Aorta (tissue), 5 donors: ENCODE measurements at regions of chr1 and their contacts with region 1.

Region 1: GRCh38 chr1:198465201-198466144 is 75.0 kb downstream of the ATP6V1G3 start:
- DNase-seq: no peak
- ATAC-seq: no peak
- H3K4me3 ChIP-seq: no peak overlapping the region
- H3K27ac ChIP-seq: no peak overlapping the region
- H3K4me1 ChIP-seq: no peaks in the 10 kb centered on the region
- H3K27me3 ChIP-seq: no peaks in the 10 kb centered on the region

Region 2: DNA sequence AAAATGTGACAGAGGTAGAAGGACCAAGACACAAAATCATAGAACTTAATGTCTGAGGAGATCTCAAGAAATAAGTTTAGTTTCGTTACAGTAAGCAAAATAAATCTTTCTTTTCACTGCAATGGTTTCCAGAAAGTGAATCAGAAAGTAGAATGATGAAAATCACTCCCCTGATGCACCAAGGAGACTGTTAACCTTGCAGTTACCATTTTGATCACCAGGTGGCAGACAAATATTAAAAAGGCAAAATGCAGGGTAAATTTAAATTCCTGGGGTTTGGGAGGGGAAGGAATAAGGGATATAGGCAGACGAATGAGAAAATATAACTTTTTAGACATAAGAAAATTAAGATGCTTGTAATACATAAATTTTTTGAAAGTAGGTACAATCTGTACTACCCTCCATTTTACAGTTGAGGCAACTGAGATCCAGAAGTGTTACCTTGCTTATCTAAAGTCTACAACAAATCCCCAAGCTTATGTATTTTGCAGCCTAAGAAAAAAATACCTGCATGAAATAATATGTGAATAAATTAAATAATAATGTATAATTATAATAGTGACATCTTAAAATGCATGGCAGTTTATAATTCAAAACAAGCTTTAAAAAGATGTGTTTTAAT is 944.2 kb before region 1 on chr1:
- intact Hi-C with region 1: loop called in 1 of 2 experiments (anchors 10 kb)
- DNase-seq: no peak
- ATAC-seq: no peak
- H3K4me3 ChIP-seq: no peak overlapping the region
- H3K27ac ChIP-seq: no peak overlapping the region
- H3K4me1 ChIP-seq: no peaks in the 10 kb centered on the region
- H3K27me3 ChIP-seq: no peaks in the 10 kb centered on the region

Region 3: GRCh38 chr1:197614916-197615692 is 850.4 kb before region 1 on chr1:
- intact Hi-C with region 1: loop called in 1 of 2 experiments (anchors 5 kb)
- DNase-seq: no peak
- ATAC-seq: peak; percentile 66
- H3K4me3 ChIP-seq: no peak overlapping the region
- H3K27ac ChIP-seq: no peak overlapping the region
- H3K4me1 ChIP-seq: no peaks in the 10 kb centered on the region
- H3K27me3 ChIP-seq: no peaks in the 10 kb centered on the region

Region 4: DNA sequence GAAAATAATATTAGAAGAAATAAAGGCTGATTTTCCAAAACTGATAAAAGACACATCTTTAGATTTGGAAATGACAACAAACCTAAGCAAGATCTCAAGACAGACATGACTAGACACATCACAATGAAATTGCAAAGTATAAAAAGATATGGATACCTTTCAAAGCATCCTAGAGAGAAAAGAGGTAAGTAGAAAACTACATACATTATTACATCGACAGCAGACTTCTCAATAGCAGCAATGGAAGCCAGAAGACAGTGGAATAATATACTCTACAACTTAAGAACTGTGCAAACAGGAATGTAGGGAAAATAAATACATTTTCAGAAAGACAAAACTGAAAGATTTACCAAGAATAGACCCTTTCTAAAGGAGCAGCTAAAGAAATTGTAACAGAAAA is 740.4 kb before region 1 on chr1:
- intact Hi-C with region 1: loop called in 1 of 2 experiments (anchors 10 kb)
- DNase-seq: no peak
- ATAC-seq: no peak
- H3K4me3 ChIP-seq: no peak overlapping the region
- H3K27ac ChIP-seq: no peak overlapping the region
- H3K4me1 ChIP-seq: no peaks in the 10 kb centered on the region
- H3K27me3 ChIP-seq: no peaks in the 10 kb centered on the region

Region 5: DNA sequence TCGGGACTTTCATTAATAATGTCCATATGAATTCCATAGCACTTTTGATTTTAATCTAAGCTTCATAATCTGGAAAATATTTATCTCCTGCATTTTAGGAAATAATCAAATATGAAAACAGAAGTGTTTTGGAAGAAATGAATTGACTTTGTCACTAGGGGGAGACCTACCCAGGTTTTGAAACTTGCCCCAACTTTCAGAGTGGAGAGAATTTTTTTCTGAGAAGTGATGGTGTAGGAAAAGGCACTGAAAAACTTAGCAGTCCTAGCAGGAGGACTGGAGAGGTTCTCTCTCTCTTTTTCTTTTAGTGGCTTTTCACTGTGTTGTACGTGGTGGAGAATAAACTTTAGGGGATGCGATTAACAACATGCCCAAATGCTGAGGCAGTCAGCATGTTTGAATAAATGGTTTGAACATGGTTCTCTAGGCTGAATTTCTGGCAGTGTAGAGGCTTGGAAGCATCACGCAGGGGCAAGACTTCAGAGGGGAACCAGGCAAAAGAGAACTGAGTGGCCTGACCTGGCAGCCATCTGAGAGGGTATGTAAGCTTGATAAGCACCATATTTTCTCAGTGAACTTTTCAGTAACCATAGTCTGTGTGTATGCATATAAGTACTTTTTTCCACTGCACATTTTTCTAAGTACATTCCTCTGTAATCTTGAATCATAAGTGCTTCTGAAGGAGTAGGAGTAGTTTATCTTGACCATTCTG is 377.0 kb before region 1 on chr1:
- intact Hi-C with region 1: loop called in 1 of 2 experiments (anchors 5 kb)
- DNase-seq: no peak
- ATAC-seq: peak; percentile 60
- H3K4me3 ChIP-seq: no peak overlapping the region
- H3K27ac ChIP-seq: no peak overlapping the region
- H3K4me1 ChIP-seq: peaks cover 0 to 2% of the 10 kb centered on the region in 2 donors
- H3K27me3 ChIP-seq: no peaks in the 10 kb centered on the region

Region 6: GRCh38 chr1:198517623-198518199 is 52.2 kb after region 1 on chr1:
- intact Hi-C with region 1: no loop called
- DNase-seq: no peak
- ATAC-seq: no peak
- H3K4me3 ChIP-seq: no peak overlapping the region
- H3K27ac ChIP-seq: no peak overlapping the region
- H3K4me1 ChIP-seq: no peaks in the 10 kb centered on the region
- H3K27me3 ChIP-seq: no peaks in the 10 kb centered on the region